ENCODE measurements at regions of chr20 and their contacts with region 1.

Region 1: DNA sequence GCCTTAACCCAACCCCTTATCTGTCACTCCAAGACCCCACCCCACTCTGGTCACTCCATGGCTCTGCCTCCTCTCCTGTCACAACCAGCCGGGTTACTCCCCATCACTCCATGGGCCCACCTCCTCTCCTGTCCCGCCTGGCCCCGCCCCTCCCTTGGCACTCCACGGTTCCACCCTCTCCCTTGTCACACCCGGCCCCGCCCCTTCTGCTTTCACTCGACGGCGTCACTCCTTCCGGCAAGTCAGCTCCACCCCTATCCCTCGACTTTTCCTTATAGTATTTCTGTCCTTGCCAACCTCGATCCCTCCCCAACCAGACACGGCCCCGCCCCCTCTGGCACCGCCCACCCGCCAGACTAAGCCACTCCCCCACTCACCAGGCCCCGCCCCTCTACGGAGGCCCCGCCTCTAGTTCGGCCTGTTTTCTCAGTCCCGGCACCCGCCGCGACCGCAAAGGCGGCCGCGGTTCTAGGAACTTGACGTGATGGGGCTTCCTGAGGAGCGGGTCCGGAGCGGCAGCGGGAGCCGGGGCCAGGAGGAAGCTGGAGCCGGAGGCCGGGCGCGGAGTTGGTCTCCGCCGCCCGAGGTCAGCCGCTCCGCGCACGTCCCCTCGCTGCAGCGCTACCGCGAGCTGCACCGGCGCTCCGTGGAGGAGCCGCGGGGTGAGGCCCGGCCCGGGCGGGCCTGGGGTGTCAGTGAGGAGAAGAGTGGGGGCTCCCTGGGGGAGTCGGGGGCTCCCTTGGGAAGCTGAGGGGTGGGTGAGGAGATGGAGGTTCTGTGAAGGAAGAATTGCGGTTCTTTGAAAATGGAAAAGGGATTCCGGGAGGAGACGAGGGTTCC is at the start of gene ACSS2:
- DNase-seq: peak; percentile 98
- ATAC-seq: peak; percentile 84
- H3K4me3 Mint-ChIP-seq: peak within 1 kb of the TSS; percentile 85
- H3K27ac Mint-ChIP-seq: peak within 1 kb of the TSS; percentile 84
- H3K4me1 Mint-ChIP-seq: peaks cover 54% of the 10 kb centered on the region
- H3K27me3 Mint-ChIP-seq: peaks cover 2% of the 10 kb centered on the region
- total RNA-seq, gene ACSS2: 24.0 to 25.5 TPM

Region 2: DNA sequence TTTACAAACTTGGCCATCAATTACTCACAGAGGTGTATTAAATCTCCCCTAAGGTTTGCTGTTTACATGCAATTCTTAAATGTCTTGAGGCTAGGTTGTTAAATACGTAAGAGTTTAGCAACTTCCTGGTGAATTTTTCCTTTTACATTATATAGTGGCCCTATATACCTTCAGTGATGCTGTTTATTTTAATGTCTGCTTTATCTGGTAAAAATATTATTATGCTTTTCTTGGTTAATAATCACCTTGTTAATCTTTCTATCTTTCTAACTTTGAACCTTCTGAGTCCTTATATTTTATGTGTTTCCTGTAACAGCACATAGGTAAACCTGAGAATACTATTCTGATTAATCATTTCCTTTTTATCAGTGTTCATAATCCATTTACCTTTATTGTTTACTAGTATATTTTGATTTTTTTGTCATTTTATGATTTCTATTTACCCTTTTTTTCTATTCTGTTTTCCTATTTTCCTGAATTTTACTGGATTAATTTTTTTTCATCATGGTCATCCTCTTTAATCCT is 114.3 kb before region 1 on chr20:
- CTCF ChIA-PET with region 1: no interaction called
- POLR2A ChIA-PET with region 1: no interaction called
- DNase-seq: no peak
- ATAC-seq: no peak
- H3K4me3 Mint-ChIP-seq: no peak overlapping the region
- H3K27ac Mint-ChIP-seq: no peak overlapping the region
- H3K4me1 Mint-ChIP-seq: no peaks in the 10 kb centered on the region
- H3K27me3 Mint-ChIP-seq: no peaks in the 10 kb centered on the region

Region 3: DNA sequence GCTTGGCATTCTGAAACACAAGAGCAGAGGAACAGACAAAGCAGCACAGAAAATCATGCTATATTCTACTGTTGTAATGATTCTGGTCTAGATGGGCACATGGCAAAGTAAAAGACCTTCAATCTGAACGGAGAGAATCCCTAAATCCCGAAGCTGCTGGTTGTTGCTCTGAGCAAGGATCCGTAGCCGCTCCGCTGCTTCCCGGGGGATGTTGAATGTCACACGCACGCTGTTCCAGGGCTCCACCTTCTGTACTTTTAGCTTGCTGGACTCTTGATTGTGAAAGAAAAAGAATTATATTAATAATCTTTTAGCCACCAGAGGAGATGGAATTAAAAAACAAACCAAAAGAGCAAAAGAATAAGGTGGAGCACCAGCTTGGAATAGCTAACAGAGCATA is 100.2 kb before region 1 on chr20:
- CTCF ChIA-PET with region 1: no interaction called
- POLR2A ChIA-PET with region 1: no interaction called
- DNase-seq: no peak
- ATAC-seq: no peak
- H3K4me3 Mint-ChIP-seq: no peak overlapping the region
- H3K27ac Mint-ChIP-seq: no peak overlapping the region
- H3K4me1 Mint-ChIP-seq: peaks cover 4% of the 10 kb centered on the region
- H3K27me3 Mint-ChIP-seq: no peaks in the 10 kb centered on the region

Region 4: DNA sequence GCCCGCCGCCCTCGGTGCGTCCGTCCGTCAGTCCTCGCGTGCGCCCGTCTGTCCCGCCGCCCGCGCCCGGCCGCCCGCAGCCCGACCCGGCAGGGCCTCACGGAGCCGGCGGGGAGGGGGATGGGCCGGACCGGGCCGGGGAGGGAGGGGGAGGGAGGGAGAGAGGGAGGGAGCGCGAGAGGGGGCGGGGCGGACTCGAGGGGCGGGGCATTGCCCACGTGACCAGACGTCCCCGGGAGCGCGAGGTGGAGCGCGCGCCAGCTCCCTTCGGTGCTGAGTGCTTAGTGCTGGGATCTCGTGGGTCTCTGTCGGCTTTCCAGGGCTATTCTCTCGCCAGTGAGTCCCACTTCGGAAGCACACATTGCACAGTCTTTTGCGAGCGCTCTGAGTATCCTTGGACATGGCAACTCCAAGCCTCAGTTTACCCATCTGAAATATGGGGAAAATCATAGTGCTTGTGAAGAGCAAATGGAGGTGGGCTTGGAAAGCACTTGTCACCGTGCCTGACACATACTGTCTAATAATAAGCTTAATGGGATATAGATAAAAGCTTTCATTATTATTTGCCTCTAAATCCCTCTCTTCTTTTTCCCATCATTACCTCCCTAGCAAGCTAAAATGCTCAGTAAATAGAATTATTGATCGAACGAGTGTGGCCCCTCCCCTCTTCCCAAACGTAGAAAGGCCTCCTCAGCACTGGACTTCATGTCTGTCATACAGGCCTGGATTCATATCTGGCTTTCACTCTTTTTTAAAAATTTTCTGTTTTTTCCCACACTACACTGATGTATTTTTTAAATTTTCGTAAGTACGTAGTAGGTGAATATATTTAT is 50.6 kb before region 1 on chr20 and contains the start of gene NCOA6:
- CTCF ChIA-PET with region 1: interaction called, 10 read pairs
- POLR2A ChIA-PET with region 1: no interaction called
- DNase-seq: peak; percentile 88
- ATAC-seq: peak; percentile 73
- H3K4me3 Mint-ChIP-seq: peak within 1 kb of the TSS; percentile 92
- H3K27ac Mint-ChIP-seq: peak within 1 kb of the TSS; percentile 93
- H3K4me1 Mint-ChIP-seq: peaks cover 29% of the 10 kb centered on the region
- H3K27me3 Mint-ChIP-seq: peaks cover 20% of the 10 kb centered on the region
- total RNA-seq, gene NCOA6: 25.8 to 26.9 TPM

Region 5: GRCh38 chr20:34891166-34892062 is 15.0 kb after region 1 on chr20:
- CTCF ChIA-PET with region 1: interaction called, 17 read pairs
- POLR2A ChIA-PET with region 1: interaction called, 3 read pairs
- DNase-seq: no peak
- ATAC-seq: peak; percentile 73
- H3K4me3 Mint-ChIP-seq: no peak overlapping the region
- H3K27ac Mint-ChIP-seq: peak overlapping the region; percentile 27
- H3K4me1 Mint-ChIP-seq: peaks cover 33% of the 10 kb centered on the region
- H3K27me3 Mint-ChIP-seq: no peaks in the 10 kb centered on the region

Region 6: GRCh38 chr20:34948030-34948429 is 71.6 kb after region 1 on chr20:
- CTCF ChIA-PET with region 1: interaction called, 32 read pairs
- POLR2A ChIA-PET with region 1: interaction called, 4 read pairs
- DNase-seq: no peak
- ATAC-seq: no peak
- H3K4me3 Mint-ChIP-seq: no peak overlapping the region
- H3K27ac Mint-ChIP-seq: no peak overlapping the region
- H3K4me1 Mint-ChIP-seq: peaks cover 2% of the 10 kb centered on the region
- H3K27me3 Mint-ChIP-seq: no peaks in the 10 kb centered on the region

Region 7: GRCh38 chr20:35001596-35002362 is 125.4 kb after region 1 on chr20:
- CTCF ChIA-PET with region 1: interaction called, 13 read pairs
- POLR2A ChIA-PET with region 1: no interaction called
- DNase-seq: peak; percentile 26
- ATAC-seq: no peak
- H3K4me3 Mint-ChIP-seq: no peak overlapping the region
- H3K27ac Mint-ChIP-seq: no peak overlapping the region
- H3K4me1 Mint-ChIP-seq: no peaks in the 10 kb centered on the region
- H3K27me3 Mint-ChIP-seq: no peaks in the 10 kb centered on the region